ENCODE measurements at regions of chr4 and their contacts with region 1.

Region 1: GRCh38 chr4:99462875-99463464 is 27.8 kb upstream of the ADH7 start:
- DNase-seq: peak; percentile 63
- ATAC-seq: peak; percentile 77
- H3K4me3 Mint-ChIP-seq: no peak overlapping the region
- H3K27ac Mint-ChIP-seq: no peak overlapping the region
- H3K4me1 Mint-ChIP-seq: no peaks in the 10 kb centered on the region
- H3K27me3 Mint-ChIP-seq: peaks cover 12% of the 10 kb centered on the region
- CTCF ChIP-seq: peak; percentile 83

Region 2: DNA sequence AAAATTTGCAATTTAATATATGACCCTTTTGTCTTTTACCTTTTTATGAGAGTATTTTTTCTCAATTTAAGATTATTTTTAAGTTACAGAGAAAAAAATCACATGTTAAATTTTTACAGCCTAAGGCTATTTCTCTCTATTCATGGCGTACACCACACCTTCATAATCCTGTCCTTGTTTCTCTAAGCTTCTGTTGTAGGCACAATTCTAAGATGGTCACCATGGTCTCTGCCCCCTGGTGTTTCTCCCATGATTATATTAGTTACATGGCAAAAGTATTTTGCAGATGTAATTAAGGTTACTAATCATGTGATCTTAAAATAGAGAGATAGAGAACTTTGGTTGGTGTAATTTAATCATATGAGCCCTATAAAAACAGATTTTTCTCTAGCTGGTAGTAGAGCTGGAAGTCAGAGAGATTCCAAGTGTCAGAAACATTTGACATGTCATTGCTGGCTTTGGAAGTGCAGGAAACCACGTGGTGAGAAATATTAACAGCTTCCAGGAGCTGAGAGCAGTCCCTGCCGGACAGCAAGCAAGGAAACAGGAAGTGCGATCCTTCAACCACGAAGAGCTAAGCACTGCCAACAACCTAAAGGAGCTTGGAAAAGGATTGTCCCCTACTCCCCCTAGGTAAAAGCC is 623.9 kb before region 1 on chr4:
- CTCF ChIA-PET with region 1: no interaction called
- POLR2A ChIA-PET with region 1: no interaction called
- intact Hi-C with region 1: no loop called
- DNase-seq: no peak
- ATAC-seq: no peak
- H3K4me3 Mint-ChIP-seq: no peak overlapping the region
- H3K27ac Mint-ChIP-seq: no peak overlapping the region
- H3K4me1 Mint-ChIP-seq: no peaks in the 10 kb centered on the region
- H3K27me3 Mint-ChIP-seq: no peaks in the 10 kb centered on the region
- CTCF ChIP-seq: no peak

Region 3: DNA sequence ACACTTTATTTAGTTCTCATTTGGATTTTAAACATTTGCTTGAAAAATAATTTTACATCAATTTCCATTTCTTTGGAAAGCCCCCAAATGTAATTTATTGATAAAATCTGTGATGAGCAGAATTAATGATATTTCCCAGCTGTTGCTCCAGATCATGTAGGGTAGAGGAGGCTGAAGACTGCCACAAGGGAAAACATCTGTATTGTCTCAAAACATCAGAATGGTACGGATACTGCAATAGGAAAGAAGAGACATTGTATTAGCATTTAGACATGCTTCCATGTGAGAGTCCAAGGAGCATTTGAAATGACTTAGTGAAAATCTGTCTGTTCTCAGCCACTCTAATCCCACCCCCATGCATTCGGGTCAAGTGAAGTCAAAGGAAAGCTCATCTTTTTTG is 186.6 kb before region 1 on chr4:
- CTCF ChIA-PET with region 1: no interaction called
- POLR2A ChIA-PET with region 1: no interaction called
- intact Hi-C with region 1: no loop called
- DNase-seq: no peak
- ATAC-seq: no peak
- H3K4me3 Mint-ChIP-seq: no peak overlapping the region
- H3K27ac Mint-ChIP-seq: no peak overlapping the region
- H3K4me1 Mint-ChIP-seq: no peaks in the 10 kb centered on the region
- H3K27me3 Mint-ChIP-seq: no peaks in the 10 kb centered on the region
- CTCF ChIP-seq: no peak

Region 4: DNA sequence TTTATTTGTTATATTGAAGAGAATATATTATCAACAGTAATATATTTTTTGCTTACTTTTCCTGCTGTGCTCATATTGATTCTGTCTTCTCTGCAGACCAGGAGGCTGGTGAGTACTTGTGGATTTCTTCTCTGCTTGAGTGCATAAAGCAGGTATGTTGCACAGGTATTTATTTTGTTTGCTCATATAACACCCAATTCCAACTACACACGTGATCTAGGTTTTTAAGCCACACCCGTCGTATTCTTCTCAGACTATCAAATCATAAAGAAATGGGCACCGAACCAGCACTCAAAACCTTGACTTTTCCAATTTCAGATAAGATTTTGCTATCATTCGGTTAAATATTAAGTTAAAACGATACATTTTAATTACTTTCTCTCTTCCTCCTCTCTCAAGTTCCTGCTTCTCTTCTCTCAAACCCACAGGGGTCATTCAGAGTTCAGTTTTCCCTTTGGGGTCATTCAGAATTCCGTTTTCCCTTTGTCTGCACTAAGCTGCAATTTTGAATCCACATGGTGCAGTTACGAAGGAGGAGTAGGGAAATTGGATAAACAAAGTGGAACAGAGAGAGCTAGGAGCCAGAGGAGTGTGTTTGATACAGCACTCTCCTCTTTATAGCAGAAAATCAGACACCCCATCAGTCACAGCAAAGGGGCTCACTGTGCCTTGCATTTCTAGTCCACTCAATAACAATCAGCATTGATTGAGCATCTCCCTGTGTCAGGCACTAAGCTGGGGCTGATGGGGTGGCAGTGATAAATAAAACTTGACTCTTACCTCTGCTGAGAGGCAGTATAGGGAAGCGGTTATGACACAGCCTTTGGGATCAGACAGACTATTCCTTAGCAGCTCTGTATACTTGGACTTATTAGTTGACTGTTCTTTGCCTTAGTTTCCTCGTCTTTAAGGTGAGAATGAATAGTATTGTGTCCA is 110.1 kb before region 1 on chr4 and contains the start of gene ADH1C:
- CTCF ChIA-PET with region 1: no interaction called
- POLR2A ChIA-PET with region 1: no interaction called
- intact Hi-C with region 1: no loop called
- DNase-seq: no peak
- ATAC-seq: no peak
- H3K4me3 Mint-ChIP-seq: no peak within 1 kb of the TSS
- H3K27ac Mint-ChIP-seq: no peak within 1 kb of the TSS
- H3K4me1 Mint-ChIP-seq: no peaks in the 10 kb centered on the region
- H3K27me3 Mint-ChIP-seq: peaks cover 7% of the 10 kb centered on the region
- CTCF ChIP-seq: no peak
- total RNA-seq, gene ADH1C: not detected

Region 5: GRCh38 chr4:99405433-99406115 is 57.4 kb before region 1 on chr4:
- CTCF ChIA-PET with region 1: interaction called, 12 read pairs
- POLR2A ChIA-PET with region 1: no interaction called
- intact Hi-C with region 1: loop called (anchors 5 kb)
- DNase-seq: peak; percentile 69
- ATAC-seq: peak; percentile 72
- H3K4me3 Mint-ChIP-seq: no peak overlapping the region
- H3K27ac Mint-ChIP-seq: no peak overlapping the region
- H3K4me1 Mint-ChIP-seq: peaks cover 16% of the 10 kb centered on the region
- H3K27me3 Mint-ChIP-seq: no peaks in the 10 kb centered on the region
- CTCF ChIP-seq: peak; percentile 93

Region 6: GRCh38 chr4:99473131-99473530 is 10.2 kb after region 1 on chr4:
- CTCF ChIA-PET with region 1: interaction called, 30 read pairs
- POLR2A ChIA-PET with region 1: no interaction called
- intact Hi-C with region 1: no loop called
- DNase-seq: no peak
- ATAC-seq: no peak
- H3K4me3 Mint-ChIP-seq: no peak overlapping the region
- H3K27ac Mint-ChIP-seq: no peak overlapping the region
- H3K4me1 Mint-ChIP-seq: no peaks in the 10 kb centered on the region
- H3K27me3 Mint-ChIP-seq: peaks cover 2% of the 10 kb centered on the region
- CTCF ChIP-seq: no peak

Region 7: DNA sequence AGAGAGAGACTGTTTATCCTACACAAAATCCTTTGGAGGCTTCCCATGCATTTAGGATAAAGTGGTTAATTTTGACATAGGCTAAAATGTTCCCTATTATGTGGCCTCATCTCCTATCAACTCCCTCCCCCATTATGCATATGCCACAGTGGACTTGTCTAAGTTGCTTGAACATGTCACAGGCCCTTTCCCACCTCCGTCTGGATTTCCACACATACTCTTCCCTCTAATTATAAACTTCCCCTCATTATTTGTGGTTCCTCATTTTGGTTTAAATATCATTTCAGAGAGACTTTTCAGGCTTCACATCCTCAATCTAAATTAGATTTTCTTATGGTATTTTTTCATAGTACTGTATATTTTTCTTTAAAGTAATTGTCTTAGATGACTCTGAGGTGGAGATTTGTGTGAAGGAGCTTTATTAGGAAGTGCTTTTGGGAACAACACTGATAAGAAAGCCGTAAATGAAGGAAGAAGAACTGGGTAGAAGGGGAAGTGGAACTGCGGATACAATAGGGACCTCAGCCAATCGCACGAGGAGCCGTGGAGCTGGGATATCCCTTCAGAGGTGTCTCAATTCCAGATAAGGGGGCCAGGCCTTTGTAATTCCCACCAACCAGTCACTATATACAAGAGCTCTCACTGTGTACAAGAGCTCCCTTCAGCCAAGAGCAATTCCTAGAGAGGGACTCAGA is 55.8 kb after region 1 on chr4:
- CTCF ChIA-PET with region 1: no interaction called
- POLR2A ChIA-PET with region 1: no interaction called
- intact Hi-C with region 1: no loop called
- DNase-seq: no peak
- ATAC-seq: no peak
- H3K4me3 Mint-ChIP-seq: no peak overlapping the region
- H3K27ac Mint-ChIP-seq: no peak overlapping the region
- H3K4me1 Mint-ChIP-seq: no peaks in the 10 kb centered on the region
- H3K27me3 Mint-ChIP-seq: peaks cover 3% of the 10 kb centered on the region
- CTCF ChIP-seq: no peak

Measured in activated CD8-positive, alpha-beta T cell treated with anti-CD3 and anti-CD28 coated beads for 36 hours (primary cell).